ENCODE measurements at regions of chr17 and their contacts with region 1.

Region 1: DNA sequence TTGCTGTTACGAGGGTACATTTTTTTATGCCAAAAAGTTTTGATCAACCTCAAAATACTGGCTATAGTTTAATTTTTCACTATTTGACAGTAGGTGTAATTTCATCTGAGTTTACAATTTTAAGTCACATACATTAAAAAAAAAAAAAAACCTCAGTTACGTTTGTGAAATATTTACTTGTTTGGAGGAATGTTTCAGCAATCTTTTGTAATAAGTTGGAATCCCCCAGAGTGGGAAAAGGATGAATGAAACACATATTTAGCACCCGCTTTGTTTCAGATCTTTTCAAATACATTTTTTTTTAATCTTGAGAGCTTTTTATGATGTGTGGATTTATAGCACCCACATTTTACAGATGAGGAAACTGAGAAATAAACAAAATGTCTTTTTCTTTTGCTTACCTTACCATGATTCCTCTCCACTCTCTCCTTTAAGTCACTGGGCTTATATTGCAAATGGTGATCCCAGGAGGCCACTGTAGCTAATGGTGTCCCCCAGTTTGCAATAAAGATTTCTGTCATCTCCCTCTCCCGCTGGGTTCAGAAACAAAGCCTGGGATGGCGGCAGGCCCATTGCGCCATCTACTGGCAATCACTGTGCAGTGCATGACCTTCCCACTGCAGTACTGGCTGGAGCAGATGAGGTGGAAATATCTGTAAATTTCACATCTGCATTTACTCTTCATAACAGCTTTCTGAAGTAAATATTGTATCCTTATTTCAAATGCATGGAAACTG is 27.7 kb downstream of the TBC1D3B start:
- DNase-seq: peak; percentile 95
- H3K4me3 ChIP-seq: peak overlapping the region in 1 of 8 donors; percentile 21
- H3K27ac ChIP-seq: peak overlapping the region in 3 of 8 donors; percentile 8 to 50 (median 19)
- H3K4me1 ChIP-seq: peaks cover 0 to 26% (median 9%) of the 10 kb centered on the region in 6 donors
- H3K27me3 ChIP-seq: peaks cover 0 to 35% (median 2%) of the 10 kb centered on the region in 7 donors
- CTCF ChIP-seq: peak; percentile 97 to 100 (median 100)
- POLR2A ChIP-seq: no peak

Region 2: GRCh38 chr17:35849469-35850348 is 299.0 kb before region 1 on chr17:
- intact Hi-C with region 1: loop called (anchors 10 kb)
- DNase-seq: no peak
- H3K4me3 ChIP-seq: no peak overlapping the region
- H3K27ac ChIP-seq: no peak overlapping the region
- H3K4me1 ChIP-seq: peaks cover 0 to 12% (median 0%) of the 10 kb centered on the region in 6 donors
- H3K27me3 ChIP-seq: no peaks in the 10 kb centered on the region
- CTCF ChIP-seq: peak; percentile 39 to 78 (median 69)
- POLR2A ChIP-seq: no peak

Region 3: DNA sequence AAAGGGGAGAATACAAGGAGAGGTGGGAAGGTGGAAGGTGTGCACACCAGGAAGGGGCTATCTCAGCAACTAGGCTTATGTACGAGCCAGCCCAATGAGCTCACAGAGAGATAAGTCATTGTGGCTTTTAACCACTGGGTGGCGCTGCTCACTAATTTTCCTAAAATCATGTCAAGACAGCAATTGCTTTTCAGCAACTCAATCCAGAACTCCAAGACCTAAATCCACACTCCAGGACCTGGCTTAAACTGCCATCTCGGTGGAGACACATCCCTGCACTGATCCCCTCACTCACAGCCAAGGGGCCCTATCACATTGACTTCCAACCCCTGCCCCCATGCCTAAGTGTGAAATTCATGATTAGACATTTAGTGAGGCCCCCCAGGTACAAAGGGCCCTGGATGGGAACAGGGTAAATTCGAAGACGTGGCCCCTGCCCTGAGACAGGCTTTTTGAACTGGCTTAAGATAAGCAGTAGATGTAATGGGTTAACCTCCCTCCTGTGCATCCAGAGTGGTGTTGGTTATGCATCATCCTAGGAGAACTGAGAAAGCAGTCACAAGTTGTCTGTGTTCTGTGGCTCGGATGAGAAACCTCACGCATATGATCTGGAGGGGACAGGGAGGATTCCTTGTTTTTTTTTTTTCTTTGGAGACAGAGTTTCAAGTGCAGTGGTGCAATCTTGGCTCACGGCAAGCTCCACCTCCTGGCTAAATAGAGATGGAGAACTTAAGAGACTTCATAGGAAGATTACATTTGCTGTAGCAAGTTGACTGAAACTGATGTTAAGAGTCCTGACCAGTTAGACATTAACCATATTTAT is 179.0 kb before region 1 on chr17:
- intact Hi-C with region 1: loop called (anchors 5 kb)
- DNase-seq: peak; percentile 84
- H3K4me3 ChIP-seq: no peak overlapping the region
- H3K27ac ChIP-seq: no peak overlapping the region
- H3K4me1 ChIP-seq: peaks cover 6 to 30% (median 16%) of the 10 kb centered on the region in 6 donors
- H3K27me3 ChIP-seq: peaks cover 0 to 7% (median 0%) of the 10 kb centered on the region in 7 donors
- CTCF ChIP-seq: peak; percentile 73 to 93 (median 86)
- POLR2A ChIP-seq: no peak

Region 4: DNA sequence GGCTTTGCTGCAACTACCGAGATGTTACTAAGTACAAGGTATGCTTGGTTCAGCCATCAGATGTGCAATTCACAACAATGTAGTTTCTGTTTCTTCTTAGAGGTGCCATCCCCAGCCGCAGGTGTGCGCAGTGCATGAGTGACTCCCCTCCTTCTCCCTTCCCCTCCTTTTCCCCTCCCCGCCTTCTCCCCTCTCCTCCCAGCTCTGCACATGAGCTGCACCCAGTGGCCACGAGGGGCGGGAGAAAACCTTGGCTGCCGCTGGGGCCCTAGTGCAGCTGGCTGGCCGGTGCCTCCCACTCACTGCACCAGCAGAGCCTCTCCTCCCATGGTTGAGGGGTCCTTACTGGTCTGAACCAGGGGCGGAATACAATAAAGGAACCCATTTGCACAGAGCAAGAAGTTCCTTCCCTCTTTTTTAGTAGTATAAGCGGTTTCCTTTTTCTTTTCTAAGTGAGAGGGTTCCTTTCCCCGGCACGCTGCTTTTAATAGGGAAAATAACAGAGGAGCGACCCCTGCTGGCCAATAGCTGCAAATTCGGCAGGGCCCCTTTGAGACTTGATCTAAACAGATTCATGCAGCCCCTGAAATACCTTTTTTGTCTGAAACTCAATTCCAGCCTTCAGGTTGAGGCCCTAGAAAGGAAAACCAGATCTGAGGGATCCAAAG is 139.6 kb before region 1 on chr17:
- intact Hi-C with region 1: no loop called
- DNase-seq: no peak
- H3K4me3 ChIP-seq: no peak overlapping the region
- H3K27ac ChIP-seq: no peak overlapping the region
- H3K4me1 ChIP-seq: peaks cover 0 to 12% (median 7%) of the 10 kb centered on the region in 6 donors
- H3K27me3 ChIP-seq: no peaks in the 10 kb centered on the region
- CTCF ChIP-seq: peak in 7 of 11 experiments; percentile 9 to 46 (median 33)
- POLR2A ChIP-seq: no peak

Region 5: GRCh38 chr17:36048066-36048465 is 100.7 kb before region 1 on chr17:
- intact Hi-C with region 1: no loop called
- DNase-seq: no peak
- H3K4me3 ChIP-seq: no peak overlapping the region
- H3K27ac ChIP-seq: no peak overlapping the region
- H3K4me1 ChIP-seq: no peaks in the 10 kb centered on the region
- H3K27me3 ChIP-seq: peaks cover 0 to 12% (median 0%) of the 10 kb centered on the region in 7 donors
- CTCF ChIP-seq: no peak
- POLR2A ChIP-seq: no peak

Region 6: DNA sequence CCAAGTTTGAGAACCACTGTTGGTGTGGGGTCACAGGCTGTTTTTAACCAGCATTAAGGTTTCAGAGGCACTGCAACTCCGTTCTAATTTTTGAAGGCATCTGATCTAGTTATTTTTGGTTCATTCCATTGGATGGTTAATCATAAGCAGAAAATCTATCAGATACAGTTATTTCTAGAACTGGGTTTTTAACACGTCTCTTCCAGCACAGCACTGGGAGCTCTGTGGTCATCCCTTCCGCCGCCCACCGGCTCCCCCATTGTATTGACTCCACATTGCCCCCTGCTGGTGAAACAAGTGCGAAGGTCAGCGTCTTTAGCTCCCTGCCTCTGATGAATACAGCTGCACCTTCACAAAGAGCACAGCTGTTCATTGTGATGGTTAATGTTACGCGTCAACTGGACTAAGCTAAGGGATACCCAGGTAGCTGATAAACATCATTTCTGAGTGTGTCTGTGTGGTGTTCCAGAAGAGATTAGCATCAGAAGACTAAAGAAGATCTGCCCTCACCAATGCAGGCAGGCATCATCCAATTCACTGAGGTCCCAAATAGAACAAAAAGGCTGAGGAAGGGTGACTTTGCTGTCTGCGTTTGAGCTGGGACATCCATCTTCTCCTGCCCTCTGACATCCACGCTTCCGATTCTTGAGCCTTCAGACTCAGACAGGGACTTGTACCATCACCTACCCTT is 76.2 kb before region 1 on chr17:
- intact Hi-C with region 1: loop called (anchors 10 kb)
- DNase-seq: peak; percentile 88
- H3K4me3 ChIP-seq: no peak overlapping the region
- H3K27ac ChIP-seq: peak overlapping the region in 5 of 8 donors; percentile 19 to 84 (median 74)
- H3K4me1 ChIP-seq: peaks cover 0 to 23% (median 5%) of the 10 kb centered on the region in 6 donors
- H3K27me3 ChIP-seq: no peaks in the 10 kb centered on the region
- CTCF ChIP-seq: peak; percentile 53 to 87 (median 78)
- POLR2A ChIP-seq: no peak

Region 7: GRCh38 chr17:36183001-36183971 is 34.6 kb after region 1 on chr17:
- intact Hi-C with region 1: no loop called
- DNase-seq: peak; percentile 91
- H3K4me3 ChIP-seq: peak overlapping the region; percentile 20 to 74 (median 45)
- H3K27ac ChIP-seq: peak overlapping the region in 7 of 8 donors; percentile 68 to 91 (median 82)
- H3K4me1 ChIP-seq: peaks cover 4 to 48% (median 25%) of the 10 kb centered on the region in 6 donors
- H3K27me3 ChIP-seq: peaks cover 0 to 60% (median 26%) of the 10 kb centered on the region in 7 donors
- CTCF ChIP-seq: no peak
- POLR2A ChIP-seq: no peak